Panc1 (cell line): ENCODE measurements at regions of chr14 and their contacts with region 1.

Region 1: GRCh38 chr14:69242311-69243224 is 17.4 kb upstream of the GALNT16 start:
- DNase-seq: peak; percentile 33
- ATAC-seq: peak; percentile 87
- H3K4me3 ChIP-seq: no peak overlapping the region
- H3K27ac ChIP-seq: no peak overlapping the region
- H3K4me1 ChIP-seq: no peaks in the 10 kb centered on the region
- H3K27me3 ChIP-seq: no peaks in the 10 kb centered on the region
- CTCF ChIP-seq: peak; percentile 73

Region 2: GRCh38 chr14:69118313-69118712 is 124.3 kb before region 1 on chr14:
- CTCF ChIA-PET with region 1: no interaction called
- POLR2A ChIA-PET with region 1: no interaction called
- in situ Hi-C with region 1: no loop called
- intact Hi-C with region 1: no loop called
- DNase-seq: no peak
- ATAC-seq: no peak
- H3K4me3 ChIP-seq: no peak overlapping the region
- H3K27ac ChIP-seq: no peak overlapping the region
- H3K4me1 ChIP-seq: no peaks in the 10 kb centered on the region
- H3K27me3 ChIP-seq: no peaks in the 10 kb centered on the region
- CTCF ChIP-seq: no peak

Region 3: DNA sequence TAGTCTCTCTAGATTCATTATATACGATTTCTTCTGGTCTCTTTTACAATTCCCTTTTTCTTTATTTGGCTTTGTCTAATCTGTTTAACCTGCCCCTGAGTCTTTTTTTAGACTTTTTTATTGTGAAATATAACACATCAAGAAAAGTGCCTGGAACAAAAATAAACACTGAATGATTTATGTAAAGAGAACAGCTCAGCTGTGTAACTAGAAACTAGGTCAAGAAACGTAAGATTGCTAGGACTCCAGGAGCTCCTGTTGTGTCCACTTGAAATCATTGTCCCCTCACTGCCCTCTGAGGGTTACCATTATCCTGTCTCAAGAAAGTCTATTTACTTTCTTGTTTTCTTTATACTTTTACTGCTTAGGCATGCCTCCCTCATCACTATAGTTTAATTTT is 28.2 kb before region 1 on chr14:
- CTCF ChIA-PET with region 1: no interaction called
- POLR2A ChIA-PET with region 1: no interaction called
- in situ Hi-C with region 1: no loop called
- intact Hi-C with region 1: no loop called
- DNase-seq: no peak
- ATAC-seq: no peak
- H3K4me3 ChIP-seq: no peak overlapping the region
- H3K27ac ChIP-seq: no peak overlapping the region
- H3K4me1 ChIP-seq: no peaks in the 10 kb centered on the region
- H3K27me3 ChIP-seq: no peaks in the 10 kb centered on the region
- CTCF ChIP-seq: no peak

Region 4: GRCh38 chr14:69354383-69355153 is 112.0 kb after region 1 on chr14:
- CTCF ChIA-PET with region 1: no interaction called
- POLR2A ChIA-PET with region 1: no interaction called
- in situ Hi-C with region 1: no loop called
- intact Hi-C with region 1: loop called (anchors 10 kb)
- DNase-seq: no peak
- ATAC-seq: peak; percentile 59; the same call in 1 of the 2 replicates
- H3K4me3 ChIP-seq: no peak overlapping the region
- H3K27ac ChIP-seq: no peak overlapping the region
- H3K4me1 ChIP-seq: no peaks in the 10 kb centered on the region
- H3K27me3 ChIP-seq: no peaks in the 10 kb centered on the region
- CTCF ChIP-seq: no peak

Region 5: GRCh38 chr14:69451956-69452355 is 209.4 kb after region 1 on chr14:
- CTCF ChIA-PET with region 1: interaction called, 13 read pairs
- POLR2A ChIA-PET with region 1: no interaction called
- in situ Hi-C with region 1: no loop called
- intact Hi-C with region 1: no loop called
- DNase-seq: no peak
- ATAC-seq: no peak
- H3K4me3 ChIP-seq: no peak overlapping the region
- H3K27ac ChIP-seq: no peak overlapping the region
- H3K4me1 ChIP-seq: no peaks in the 10 kb centered on the region
- H3K27me3 ChIP-seq: no peaks in the 10 kb centered on the region
- CTCF ChIP-seq: no peak

Region 6: DNA sequence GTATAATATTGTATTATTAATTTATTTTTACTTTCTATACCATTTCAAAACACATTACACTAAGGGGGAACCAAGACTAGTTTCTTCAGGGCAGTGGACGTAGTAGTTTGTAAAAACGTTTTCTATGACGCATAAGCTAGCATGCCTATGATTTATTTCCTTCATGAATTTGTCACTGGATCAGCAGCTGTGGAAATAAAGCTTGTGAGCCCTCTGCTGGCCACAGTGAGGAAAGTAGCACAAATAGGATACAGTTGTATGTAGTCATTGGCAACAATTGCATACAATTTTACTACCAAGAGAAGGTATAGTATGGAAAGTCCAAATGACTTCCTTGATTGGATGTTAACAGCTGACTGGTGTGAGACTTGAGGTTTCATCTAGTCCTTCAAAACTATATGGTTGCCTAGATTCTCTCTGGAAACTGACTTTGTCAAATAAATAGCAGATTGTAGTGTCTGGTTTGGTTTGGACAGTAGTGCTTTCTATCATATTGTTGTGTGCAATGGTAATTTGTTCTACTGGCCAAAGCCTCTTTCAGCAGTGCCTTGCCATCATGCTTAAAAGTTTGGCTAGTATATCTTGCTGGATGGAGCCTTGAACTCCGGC is 217.6 kb after region 1 on chr14:
- CTCF ChIA-PET with region 1: no interaction called
- POLR2A ChIA-PET with region 1: interaction called, 4 read pairs
- in situ Hi-C with region 1: no loop called
- intact Hi-C with region 1: loop called (anchors 1 kb)
- DNase-seq: peak; percentile 71
- ATAC-seq: peak; percentile 88
- H3K4me3 ChIP-seq: no peak overlapping the region
- H3K27ac ChIP-seq: no peak overlapping the region
- H3K4me1 ChIP-seq: no peaks in the 10 kb centered on the region
- H3K27me3 ChIP-seq: no peaks in the 10 kb centered on the region
- CTCF ChIP-seq: peak; percentile 72; the same call in 1 of the 2 replicates

Region 7: DNA sequence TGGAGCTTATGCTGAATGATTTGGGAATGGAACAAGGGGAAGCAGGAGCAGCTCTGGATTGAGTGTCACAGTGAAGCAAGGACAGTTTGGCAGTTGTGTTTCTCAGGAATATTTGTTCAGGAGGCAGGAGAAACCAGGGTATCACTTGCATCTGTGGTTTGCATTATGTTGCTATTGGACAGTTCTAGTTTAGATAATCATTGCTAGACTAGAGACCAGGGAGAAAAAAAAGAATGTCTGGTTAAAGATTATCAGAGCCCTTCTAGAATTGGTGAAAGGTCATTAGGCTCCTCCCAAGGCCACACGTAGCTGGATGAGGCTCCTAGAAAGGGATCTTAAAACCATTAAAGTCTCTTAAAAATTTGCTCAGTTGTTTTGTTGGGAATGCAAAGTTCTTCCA is 507.4 kb after region 1 on chr14:
- CTCF ChIA-PET with region 1: no interaction called
- POLR2A ChIA-PET with region 1: interaction called, 12 read pairs
- in situ Hi-C with region 1: no loop called
- intact Hi-C with region 1: no loop called
- DNase-seq: no peak
- ATAC-seq: no peak
- H3K4me3 ChIP-seq: no peak overlapping the region
- H3K27ac ChIP-seq: no peak overlapping the region
- H3K4me1 ChIP-seq: no peaks in the 10 kb centered on the region
- H3K27me3 ChIP-seq: no peaks in the 10 kb centered on the region
- CTCF ChIP-seq: no peak